ENCODE measurements at regions of chr13 and their contacts with region 1.

Region 1: GRCh38 chr13:41554626-41555386 is 97.5 kb downstream of the RGCC start:
- DNase-seq: peak; percentile 77
- H3K4me3 Mint-ChIP-seq: no peak overlapping the region
- H3K27ac Mint-ChIP-seq: peak overlapping the region; percentile 9
- H3K4me1 Mint-ChIP-seq: peaks cover 21% of the 10 kb centered on the region
- H3K27me3 Mint-ChIP-seq: peaks cover 2% of the 10 kb centered on the region

Region 2: DNA sequence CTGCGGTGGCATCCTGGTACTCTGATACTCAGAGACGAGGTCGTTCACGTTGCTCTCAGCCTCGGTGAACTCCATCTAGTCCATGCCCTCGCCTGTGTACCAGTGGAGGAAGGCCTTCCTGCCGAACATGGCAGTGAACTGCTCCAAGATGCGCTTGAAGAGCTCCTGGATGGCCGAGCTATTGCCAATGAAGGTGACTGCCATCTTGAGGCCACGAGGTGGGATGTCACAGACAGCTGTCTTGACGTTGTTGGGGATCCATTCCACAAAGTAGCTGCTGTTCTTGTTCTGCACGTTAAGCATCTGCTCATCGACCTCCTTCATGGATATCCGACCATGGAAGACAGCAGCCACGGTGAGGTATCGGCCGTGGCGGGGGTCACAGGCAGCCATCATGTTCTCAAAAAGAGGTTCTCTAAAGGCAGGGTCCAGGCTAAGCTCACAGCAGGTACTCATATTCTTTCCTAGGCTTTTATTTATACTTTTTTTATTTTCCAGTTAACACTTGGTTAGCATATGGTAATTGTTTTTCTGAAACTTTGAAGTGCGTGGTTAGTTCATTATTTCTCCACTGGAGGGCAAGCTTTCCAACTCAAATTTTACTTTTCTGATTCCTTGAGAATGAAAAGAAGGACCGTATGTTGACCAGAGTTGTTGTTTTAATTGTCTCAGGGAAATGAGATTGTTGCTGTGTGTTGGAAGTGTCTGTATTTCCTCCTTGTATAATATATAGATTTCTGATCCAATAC is 169.9 kb before region 1 on chr13:
- CTCF ChIA-PET with region 1: no interaction called
- POLR2A ChIA-PET with region 1: no interaction called
- intact Hi-C with region 1: loop called (anchors 10 kb)
- DNase-seq: no peak
- H3K4me3 Mint-ChIP-seq: no peak overlapping the region
- H3K27ac Mint-ChIP-seq: no peak overlapping the region
- H3K4me1 Mint-ChIP-seq: peaks cover 20% of the 10 kb centered on the region
- H3K27me3 Mint-ChIP-seq: no peaks in the 10 kb centered on the region

Region 3: DNA sequence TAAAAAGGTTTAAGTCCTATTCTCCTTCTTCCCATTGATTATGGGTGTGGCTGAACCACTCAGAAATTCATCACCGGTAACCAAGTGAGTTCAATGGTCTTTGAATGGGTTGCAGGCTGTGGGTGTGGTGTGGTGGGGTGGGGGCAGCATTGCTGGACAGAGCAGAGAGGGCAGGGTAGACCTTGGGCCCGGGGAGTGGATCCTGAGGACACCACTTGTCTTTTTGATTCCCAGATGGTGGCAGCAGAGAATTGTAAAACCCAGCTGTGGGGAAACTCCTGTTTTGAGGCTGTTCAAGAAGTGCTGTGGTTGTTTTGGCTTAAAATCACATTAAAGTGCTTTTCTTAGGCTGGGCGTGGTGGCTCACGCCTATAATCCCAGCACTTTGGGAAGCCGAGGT is 143.3 kb before region 1 on chr13:
- CTCF ChIA-PET with region 1: no interaction called
- POLR2A ChIA-PET with region 1: no interaction called
- intact Hi-C with region 1: loop called (anchors 1 kb)
- DNase-seq: peak; percentile 36
- H3K4me3 Mint-ChIP-seq: no peak overlapping the region
- H3K27ac Mint-ChIP-seq: no peak overlapping the region
- H3K4me1 Mint-ChIP-seq: no peaks in the 10 kb centered on the region
- H3K27me3 Mint-ChIP-seq: no peaks in the 10 kb centered on the region

Region 4: DNA sequence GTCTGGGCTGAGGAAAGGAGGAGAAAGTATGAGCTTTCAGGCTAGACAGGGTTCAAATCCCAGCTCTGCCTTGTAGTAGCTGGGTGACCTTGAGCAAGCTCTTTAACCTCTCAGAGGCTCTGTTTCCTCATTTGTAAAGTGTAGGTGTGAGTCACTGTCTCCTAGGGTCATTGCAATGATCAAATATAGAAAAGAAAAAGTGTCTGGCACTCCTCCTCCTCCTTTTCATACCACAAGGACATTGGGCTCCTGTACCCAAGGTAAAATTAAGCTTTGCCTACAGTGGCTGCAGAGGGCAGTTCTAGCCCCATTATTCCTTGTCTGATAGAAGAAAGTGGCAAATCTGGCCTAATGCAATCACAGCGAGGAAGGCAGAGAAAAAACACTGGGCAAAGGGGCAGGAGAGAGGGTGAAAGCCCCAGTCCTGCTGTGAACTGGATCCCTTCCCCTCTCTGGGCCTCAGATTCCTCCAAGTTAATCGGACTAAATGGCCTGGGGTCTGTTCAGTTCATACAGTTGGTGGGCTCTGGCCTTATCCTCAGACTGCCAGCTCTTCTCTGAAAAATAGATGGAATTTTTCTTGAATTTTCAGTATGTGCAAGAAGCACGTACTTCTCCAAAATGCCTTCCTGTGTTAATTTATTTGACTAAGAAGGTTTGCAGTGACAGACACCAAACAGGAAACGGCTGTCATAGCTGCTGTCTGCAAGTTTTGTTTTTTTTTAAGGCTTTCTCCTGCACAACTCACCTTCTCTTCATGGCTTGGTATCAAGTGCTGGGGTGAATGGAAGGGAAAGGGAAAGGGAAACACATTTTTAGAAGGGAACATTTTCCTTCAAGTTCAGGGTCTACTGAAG is 62.2 kb before region 1 on chr13:
- CTCF ChIA-PET with region 1: no interaction called
- POLR2A ChIA-PET with region 1: interaction called, 5 read pairs
- intact Hi-C with region 1: loop called (anchors 1 kb)
- DNase-seq: peak; percentile 42
- H3K4me3 Mint-ChIP-seq: peak overlapping the region; percentile 45
- H3K27ac Mint-ChIP-seq: peak overlapping the region; percentile 89
- H3K4me1 Mint-ChIP-seq: peaks cover 74% of the 10 kb centered on the region
- H3K27me3 Mint-ChIP-seq: no peaks in the 10 kb centered on the region

Region 5: GRCh38 chr13:41720839-41721561 is 166.2 kb after region 1 on chr13:
- CTCF ChIA-PET with region 1: no interaction called
- POLR2A ChIA-PET with region 1: no interaction called
- intact Hi-C with region 1: no loop called
- DNase-seq: no peak
- H3K4me3 Mint-ChIP-seq: no peak overlapping the region
- H3K27ac Mint-ChIP-seq: no peak overlapping the region
- H3K4me1 Mint-ChIP-seq: no peaks in the 10 kb centered on the region
- H3K27me3 Mint-ChIP-seq: no peaks in the 10 kb centered on the region

Measured in activated CD4-positive, alpha-beta memory T cell treated with anti-CD3 and anti-CD28 coated beads for 36 hours (primary cell).